Activated CD4-positive, alpha-beta T cell treated with anti-CD3 and anti-CD28 coated beads, Interleukin-2, amount 10 ng/mL, durations not matched to agents 24 days and 14 days (primary cell): ENCODE measurements at regions of chr4 and their contacts with region 1.

Region 1: DNA sequence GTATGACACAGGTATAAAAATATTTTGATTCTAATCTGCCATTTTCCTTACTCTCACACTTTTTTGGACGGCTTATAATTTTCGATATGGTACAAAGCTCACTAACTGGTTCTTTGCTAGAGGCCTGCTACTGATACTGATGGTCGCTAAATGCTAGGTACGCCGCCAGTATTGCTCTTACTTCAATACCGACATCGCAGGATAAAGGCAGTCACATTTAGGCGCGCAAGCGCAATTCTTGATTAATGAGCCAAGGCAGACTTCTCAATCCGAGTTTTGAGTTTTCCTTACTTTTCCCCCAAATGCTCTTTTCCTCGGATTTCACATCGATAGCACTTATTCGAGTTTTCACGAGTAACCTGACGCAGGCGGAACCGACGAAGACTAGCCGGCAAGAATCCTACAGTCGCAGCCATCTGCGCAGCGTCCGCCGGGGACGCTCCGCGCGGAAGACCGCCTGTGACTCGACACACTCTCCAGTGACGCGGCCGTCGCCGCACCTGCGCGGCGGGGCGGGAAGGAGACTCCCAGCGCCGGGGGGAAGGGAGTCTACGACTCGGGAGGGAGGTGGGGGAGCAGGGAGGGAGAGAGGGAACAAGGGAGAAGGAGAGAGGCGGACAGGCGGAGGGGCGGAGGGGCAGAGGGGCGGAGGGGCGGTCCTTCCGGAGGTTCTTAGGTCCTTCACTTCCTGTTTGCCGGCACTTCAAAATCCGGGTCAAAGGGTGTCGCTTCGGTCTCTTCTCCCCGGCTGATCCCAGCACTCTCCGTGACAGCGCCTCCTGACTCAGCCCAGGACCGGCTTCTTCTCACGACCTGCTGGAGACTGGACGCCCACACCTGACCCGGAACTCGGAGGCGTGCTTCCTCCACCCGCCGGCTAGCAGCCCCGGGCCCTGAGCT is at the start of gene USP38:
- DNase-seq: peak; percentile 94
- H3K4me3 Mint-ChIP-seq: peak within 1 kb of the TSS; percentile 90
- H3K27ac Mint-ChIP-seq: peak within 1 kb of the TSS; percentile 95
- H3K4me1 Mint-ChIP-seq: peaks cover 39% of the 10 kb centered on the region
- H3K27me3 Mint-ChIP-seq: no peaks in the 10 kb centered on the region
- total RNA-seq, gene USP38: 28.5 and 28.7 TPM in 2 replicates

Region 2: GRCh38 chr4:141220655-141221605 is 1963.5 kb before region 1 on chr4 and contains the start of gene ZNF330:
- intact Hi-C with region 1: loop called (anchors 10 kb)
- DNase-seq: peak; percentile 97
- H3K4me3 Mint-ChIP-seq: peak within 1 kb of the TSS; percentile 95
- H3K27ac Mint-ChIP-seq: peak within 1 kb of the TSS; percentile 98
- H3K4me1 Mint-ChIP-seq: peaks cover 37% of the 10 kb centered on the region
- H3K27me3 Mint-ChIP-seq: peaks cover 4% of the 10 kb centered on the region
- total RNA-seq, gene ZNF330: 60.2 and 64.6 TPM in 2 replicates

Region 3: GRCh38 chr4:141636082-141636770 is 1548.2 kb before region 1 on chr4 and contains the start of gene IL15:
- intact Hi-C with region 1: loop called (anchors 10 kb)
- DNase-seq: peak; percentile 92
- H3K4me3 Mint-ChIP-seq: peak within 1 kb of the TSS; percentile 98
- H3K27ac Mint-ChIP-seq: peak within 1 kb of the TSS; percentile 80
- H3K4me1 Mint-ChIP-seq: peaks cover 15% of the 10 kb centered on the region
- H3K27me3 Mint-ChIP-seq: peaks cover 24% of the 10 kb centered on the region
- total RNA-seq, gene IL15: 0.86 and 0.92 TPM in 2 replicates

Region 4: GRCh38 chr4:143335979-143336780 is 151.7 kb after region 1 on chr4:
- intact Hi-C with region 1: loop called (anchors 2 kb)
- DNase-seq: peak; percentile 76
- H3K4me3 Mint-ChIP-seq: peak overlapping the region; percentile 86
- H3K27ac Mint-ChIP-seq: no peak overlapping the region
- H3K4me1 Mint-ChIP-seq: peaks cover 6% of the 10 kb centered on the region
- H3K27me3 Mint-ChIP-seq: peaks cover 53% of the 10 kb centered on the region

Region 5: GRCh38 chr4:143358923-143359643 is 174.6 kb after region 1 on chr4:
- intact Hi-C with region 1: loop called (anchors 1 kb)
- DNase-seq: peak; percentile 74
- H3K4me3 Mint-ChIP-seq: peak overlapping the region; percentile 67
- H3K27ac Mint-ChIP-seq: peak overlapping the region; percentile 91
- H3K4me1 Mint-ChIP-seq: peaks cover 20% of the 10 kb centered on the region
- H3K27me3 Mint-ChIP-seq: peaks cover 9% of the 10 kb centered on the region

Region 6: DNA sequence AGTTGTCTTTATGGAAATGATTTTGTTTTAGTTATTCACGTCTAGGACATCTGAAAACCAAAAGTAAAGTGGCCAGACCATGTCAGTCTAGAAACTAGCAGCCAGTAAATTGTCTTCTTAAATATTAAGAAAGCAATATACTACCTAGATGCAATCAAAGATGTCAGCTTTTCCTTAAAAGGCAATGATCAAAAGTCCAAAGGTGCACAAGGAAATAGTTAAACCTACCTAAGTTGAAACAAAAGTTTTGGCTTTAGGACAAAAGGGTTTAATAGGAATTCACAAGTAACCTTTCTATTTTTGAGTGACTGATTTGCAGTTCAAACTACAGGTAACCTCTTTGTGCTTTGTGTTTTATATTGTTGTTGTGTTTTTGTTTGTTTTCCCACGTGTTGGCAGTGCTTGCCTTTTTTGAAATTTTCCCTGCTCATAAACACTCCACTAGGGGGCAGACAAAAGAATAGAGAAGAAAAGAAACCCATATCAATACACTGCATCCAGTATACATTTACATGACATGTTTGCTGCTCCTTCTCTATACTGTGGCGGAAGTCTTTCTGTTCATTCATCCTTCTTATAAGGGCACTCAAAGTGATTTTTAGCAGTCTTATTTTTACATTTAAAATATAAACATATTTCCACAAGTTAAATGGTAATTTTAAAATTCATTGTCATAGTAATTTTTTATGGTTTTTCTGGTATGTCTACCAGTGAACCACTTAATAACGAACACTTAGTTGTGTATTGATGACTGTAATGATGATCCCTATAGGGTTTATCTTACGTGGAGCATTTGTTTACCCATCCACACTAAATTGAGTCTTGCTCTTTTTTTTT is 214.9 kb after region 1 on chr4:
- intact Hi-C with region 1: loop called (anchors 5 kb)
- DNase-seq: peak; percentile 70
- H3K4me3 Mint-ChIP-seq: no peak overlapping the region
- H3K27ac Mint-ChIP-seq: no peak overlapping the region
- H3K4me1 Mint-ChIP-seq: peaks cover 7% of the 10 kb centered on the region
- H3K27me3 Mint-ChIP-seq: peaks cover 19% of the 10 kb centered on the region

Region 7: DNA sequence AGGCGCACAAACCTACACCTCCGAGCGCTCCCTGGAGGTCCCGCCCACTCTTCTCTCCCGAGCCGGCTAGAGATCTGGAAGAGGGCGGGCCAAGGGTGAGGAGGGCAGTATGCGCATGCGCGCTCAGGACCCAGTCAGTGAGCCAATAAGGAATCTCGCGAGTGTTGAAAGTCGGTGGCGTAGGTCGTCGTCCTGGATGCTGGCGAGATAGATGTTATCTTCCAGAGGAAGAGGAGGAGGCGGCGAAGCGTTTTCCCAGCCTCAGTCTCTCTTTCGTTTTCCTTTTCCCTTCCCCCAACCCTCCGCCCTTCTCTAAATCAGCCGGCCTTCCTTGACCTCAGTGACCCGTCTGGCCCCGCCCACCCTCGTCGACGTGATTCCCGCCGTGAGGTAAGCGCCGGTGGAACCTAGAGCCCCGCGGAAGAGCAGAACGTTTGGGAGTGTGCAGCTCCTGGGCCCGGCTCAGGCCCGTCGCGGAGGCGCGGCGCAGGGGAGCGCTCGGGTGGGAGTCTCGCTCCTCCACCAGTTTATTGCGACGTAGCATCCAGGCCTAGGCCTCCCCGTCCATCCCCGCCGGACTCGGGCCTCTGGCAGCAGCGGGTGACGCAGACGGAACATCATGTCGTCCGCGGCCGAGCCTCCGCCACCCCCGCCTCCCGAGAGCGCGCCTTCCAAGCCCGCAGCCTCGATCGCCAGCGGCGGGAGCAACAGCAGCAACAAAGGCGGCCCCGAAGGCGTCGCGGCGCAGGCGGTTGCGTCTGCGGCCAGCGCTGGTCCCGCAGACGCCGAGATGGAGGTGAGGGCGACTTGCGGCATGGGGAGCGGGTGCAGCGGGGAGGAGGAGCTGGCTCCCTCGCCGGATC is 329.1 kb after region 1 on chr4 and contains the start of gene SMARCA5:
- intact Hi-C with region 1: loop called (anchors 1 kb)
- DNase-seq: peak; percentile 98
- H3K4me3 Mint-ChIP-seq: peak within 1 kb of the TSS; percentile 100
- H3K27ac Mint-ChIP-seq: peak within 1 kb of the TSS; percentile 97
- H3K4me1 Mint-ChIP-seq: peaks cover 25% of the 10 kb centered on the region
- H3K27me3 Mint-ChIP-seq: peaks cover 14% of the 10 kb centered on the region
- total RNA-seq, gene SMARCA5: 59.0 and 60.6 TPM in 2 replicates